H1 (cell line): ENCODE measurements at regions of chr16 and their contacts with region 1.

Region 1: GRCh38 chr16:86874141-86874540 is 295.8 kb downstream of the FOXL1 start:
- DNase-seq: peak; percentile 19 to 90
- H3K4me3 ChIP-seq: no peak overlapping the region
- H3K27ac ChIP-seq: no peak overlapping the region
- H3K4me1 ChIP-seq: no peaks in the 10 kb centered on the region
- H3K27me3 ChIP-seq: no peaks in the 10 kb centered on the region
- CTCF ChIP-seq: peak; percentile 80 to 86 (median 84)
- EP300 ChIP-seq: no peak
- POLR2A ChIP-seq: no peak
- RAD21 ChIP-seq: peak; percentile 83 to 90

Region 2: GRCh38 chr16:86826941-86827340 is 47.2 kb before region 1 on chr16:
- CTCF ChIA-PET with region 1: interaction called, 14 read pairs
- POLR2A ChIA-PET with region 1: no interaction called
- DNase-seq: no peak
- H3K4me3 ChIP-seq: no peak overlapping the region
- H3K27ac ChIP-seq: no peak overlapping the region
- H3K4me1 ChIP-seq: peaks cover 3 to 20% (median 9%) of the 10 kb centered on the region in 4 experiments
- H3K27me3 ChIP-seq: peaks cover 0 to 7% (median 1%) of the 10 kb centered on the region in 4 experiments; a peak in 1 of 7 replicates
- CTCF ChIP-seq: no peak
- EP300 ChIP-seq: no peak
- POLR2A ChIP-seq: no peak
- RAD21 ChIP-seq: no peak